T-cell (primary cell): ENCODE measurements at regions of chr4 and their contacts with region 1.

Region 1: DNA sequence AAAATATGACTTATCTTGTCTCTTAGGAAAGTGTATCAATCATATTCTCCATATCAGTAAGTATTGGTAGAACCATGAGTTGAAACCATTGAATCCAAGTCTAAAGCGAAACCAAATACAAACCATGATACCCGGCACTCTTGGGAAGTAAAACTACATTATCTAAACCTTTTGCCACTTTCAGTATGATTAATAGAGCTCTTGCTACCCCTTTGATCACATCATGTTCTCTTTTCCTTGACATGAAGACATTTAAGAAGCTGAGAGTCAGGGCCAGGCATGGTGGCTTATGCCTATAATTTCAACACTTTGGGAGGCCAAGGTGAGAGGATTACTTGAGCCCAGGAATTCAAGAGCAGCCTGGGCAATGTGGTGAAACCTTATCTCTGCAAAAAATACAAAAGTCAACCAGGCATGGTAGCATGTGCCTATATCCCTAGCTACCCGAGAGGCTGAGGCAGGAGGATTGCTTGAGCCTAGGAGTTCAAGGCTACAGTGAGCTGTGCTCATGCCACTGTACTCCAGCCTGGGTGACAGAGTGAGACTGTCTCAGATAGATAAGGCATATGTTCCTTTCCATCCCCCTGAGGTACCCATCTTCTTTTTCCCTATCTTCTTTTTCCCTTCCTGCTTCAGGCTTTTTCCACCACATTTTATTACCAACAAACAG is 45.4 kb downstream of the CEP135 start:
- DNase-seq: no peak
- ATAC-seq: no peak
- H3K4me3 ChIP-seq: no peak overlapping the region
- H3K4me3 Mint-ChIP-seq: peak overlapping the region in 1 of 3 donors; percentile 14
- H3K27ac ChIP-seq: no peak overlapping the region
- H3K27ac Mint-ChIP-seq: peak overlapping the region in 1 of 2 donors; percentile 31
- H3K4me1 ChIP-seq: no peaks in the 10 kb centered on the region
- H3K4me1 Mint-ChIP-seq: peaks cover 0 to 16% (median 8%) of the 10 kb centered on the region in 3 donors
- H3K27me3 ChIP-seq: no peaks in the 10 kb centered on the region
- H3K27me3 Mint-ChIP-seq: no peaks in the 10 kb centered on the region

Region 2: DNA sequence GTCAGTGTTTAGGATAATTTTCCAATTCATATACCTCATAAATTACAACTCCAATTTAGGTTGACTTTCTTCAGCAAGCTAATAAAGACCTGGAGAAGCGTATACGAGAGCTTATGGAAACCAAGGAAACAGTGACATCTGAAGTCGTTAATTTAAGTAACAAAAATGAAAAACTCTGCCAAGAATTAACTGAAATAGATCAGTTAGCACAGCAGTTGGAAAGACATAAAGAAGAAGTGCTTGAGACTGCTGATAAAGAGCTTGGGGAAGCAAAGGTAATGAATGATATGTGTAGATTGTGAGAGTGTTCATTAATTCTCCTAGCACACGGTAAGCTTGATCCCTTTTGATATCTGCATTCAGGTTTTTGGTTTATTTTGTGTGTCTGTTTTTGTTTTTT is 28.5 kb before region 1 on chr4:
- CTCF ChIA-PET with region 1: interaction called in 1 of 2 experiments, 12 read pairs
- POLR2A ChIA-PET with region 1: interaction called in 1 of 2 experiments, 4 read pairs
- DNase-seq: no peak
- ATAC-seq: no peak
- H3K4me3 ChIP-seq: no peak overlapping the region
- H3K4me3 Mint-ChIP-seq: no peak overlapping the region
- H3K27ac ChIP-seq: no peak overlapping the region
- H3K27ac Mint-ChIP-seq: no peak overlapping the region
- H3K4me1 ChIP-seq: no peaks in the 10 kb centered on the region
- H3K4me1 Mint-ChIP-seq: peaks cover 0 to 6% (median 2%) of the 10 kb centered on the region in 3 donors
- H3K27me3 ChIP-seq: no peaks in the 10 kb centered on the region
- H3K27me3 Mint-ChIP-seq: no peaks in the 10 kb centered on the region

Region 3: DNA sequence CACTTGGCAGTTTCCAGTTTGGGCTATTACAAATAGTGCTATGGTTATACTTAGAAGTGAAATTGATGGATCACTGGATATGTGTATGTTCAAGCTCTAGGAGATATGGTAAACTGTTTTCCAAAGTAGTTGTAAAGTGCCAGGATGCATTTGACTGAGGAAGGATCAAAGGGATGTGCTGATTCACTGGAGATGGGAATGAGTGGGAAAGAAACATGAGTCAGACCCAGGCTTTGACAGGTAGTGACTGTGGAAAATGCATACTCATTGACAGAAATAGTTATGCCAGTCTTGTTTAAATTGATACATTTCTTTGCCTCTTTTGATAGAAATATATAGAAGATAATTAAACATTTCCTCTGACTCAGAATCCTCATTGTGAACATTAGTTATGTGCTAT is 32.5 kb after region 1 on chr4:
- CTCF ChIA-PET with region 1: no interaction called
- POLR2A ChIA-PET with region 1: no interaction called
- DNase-seq: no peak
- ATAC-seq: no peak
- H3K4me3 ChIP-seq: no peak overlapping the region
- H3K4me3 Mint-ChIP-seq: no peak overlapping the region
- H3K27ac ChIP-seq: no peak overlapping the region
- H3K27ac Mint-ChIP-seq: no peak overlapping the region
- H3K4me1 ChIP-seq: no peaks in the 10 kb centered on the region
- H3K4me1 Mint-ChIP-seq: no peaks in the 10 kb centered on the region
- H3K27me3 ChIP-seq: no peaks in the 10 kb centered on the region
- H3K27me3 Mint-ChIP-seq: no peaks in the 10 kb centered on the region